ENCODE measurements at regions of chr3 and their contacts with region 1.

Region 1: DNA sequence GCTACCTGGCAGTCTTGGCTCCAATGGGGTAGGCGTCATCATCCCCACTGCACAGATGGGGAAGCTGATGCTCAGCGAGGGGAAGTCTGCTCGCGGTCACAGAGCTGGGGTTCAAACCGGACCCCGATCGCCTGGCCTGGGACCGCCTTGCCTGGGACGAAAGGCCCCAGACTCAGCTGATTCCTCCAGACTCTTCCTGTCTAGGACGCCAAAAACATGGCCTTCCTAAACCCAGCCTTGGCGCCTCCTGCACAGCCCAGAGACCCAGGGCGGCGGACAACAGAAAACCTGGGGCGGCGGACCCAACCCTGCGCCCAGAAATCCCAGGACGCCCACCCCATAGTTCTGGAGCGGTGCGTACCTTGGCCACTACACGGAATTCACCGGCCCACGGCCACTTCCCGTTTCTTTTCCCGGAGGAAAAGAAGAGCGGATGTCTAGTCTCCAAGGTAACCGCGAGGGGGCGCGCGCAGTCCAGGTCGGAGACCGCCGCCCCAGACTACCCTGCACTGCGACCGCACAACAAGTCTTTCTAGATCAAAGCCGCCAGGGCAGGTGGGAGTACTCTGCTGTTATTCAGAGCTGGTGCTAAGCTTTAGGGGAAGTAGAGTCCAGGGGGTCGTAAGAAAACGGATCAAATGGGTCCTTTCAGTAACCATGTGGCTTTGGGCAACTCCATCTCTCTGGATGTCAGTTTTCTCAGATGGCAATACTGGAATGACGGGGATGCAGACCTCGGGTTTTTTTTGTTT is 4.9 kb upstream of the IL17RD start:
- DNase-seq: peak; percentile 86
- ATAC-seq: peak; percentile 67
- H3K4me3 ChIP-seq: peak overlapping the region; percentile 16 to 67 (median 51)
- H3K4me3 Mint-ChIP-seq: peak overlapping the region; percentile 46
- H3K27ac ChIP-seq: peak overlapping the region in 1 of 2 donors; percentile 5
- H3K27ac Mint-ChIP-seq: no peak overlapping the region
- H3K4me1 ChIP-seq: peaks cover 13 to 16% of the 10 kb centered on the region in 2 donors
- H3K4me1 Mint-ChIP-seq: peaks cover 11% of the 10 kb centered on the region
- H3K27me3 ChIP-seq: peaks cover 0 to 33% (median 17%) of the 10 kb centered on the region in 4 experiments
- H3K27me3 Mint-ChIP-seq: peaks cover 37% of the 10 kb centered on the region
- CTCF ChIP-seq: peak; percentile 96

Region 2: DNA sequence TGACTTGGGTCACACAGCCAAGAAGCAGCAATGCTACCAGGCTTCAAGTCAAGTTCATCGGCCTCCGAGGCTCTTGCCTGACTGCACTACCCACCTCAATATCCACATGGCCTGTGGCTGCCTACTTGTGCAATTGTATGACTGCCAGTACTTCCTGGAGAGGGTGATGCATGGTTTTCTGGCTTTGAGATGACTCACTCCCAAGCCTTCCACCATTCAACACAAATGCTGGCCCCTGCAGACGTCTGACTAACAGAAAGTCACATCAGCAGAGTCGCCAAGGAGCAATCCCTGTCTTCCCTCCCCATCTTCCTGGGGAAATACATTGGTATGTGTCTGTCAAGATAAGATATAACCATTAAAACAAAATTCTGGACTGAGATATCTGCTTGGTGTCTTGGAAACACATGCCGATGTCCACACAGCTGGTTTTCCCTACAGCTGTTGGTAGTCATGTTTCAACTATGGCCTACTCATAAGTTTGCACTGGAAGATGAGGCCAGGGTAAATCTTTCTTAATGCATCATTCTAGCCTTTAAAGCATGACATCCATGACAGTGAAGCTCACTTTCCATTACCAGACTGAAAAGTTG is 189.2 kb before region 1 on chr3:
- CTCF ChIA-PET with region 1: no interaction called
- POLR2A ChIA-PET with region 1: no interaction called
- intact Hi-C with region 1: no loop called
- DNase-seq: no peak
- ATAC-seq: no peak
- H3K4me3 ChIP-seq: no peak overlapping the region
- H3K4me3 Mint-ChIP-seq: no peak overlapping the region
- H3K27ac ChIP-seq: no peak overlapping the region
- H3K27ac Mint-ChIP-seq: no peak overlapping the region
- H3K4me1 ChIP-seq: no peaks in the 10 kb centered on the region
- H3K4me1 Mint-ChIP-seq: no peaks in the 10 kb centered on the region
- H3K27me3 ChIP-seq: no peaks in the 10 kb centered on the region
- H3K27me3 Mint-ChIP-seq: no peaks in the 10 kb centered on the region
- CTCF ChIP-seq: no peak

Region 3: GRCh38 chr3:57158813-57159738 is 11.0 kb before region 1 on chr3:
- CTCF ChIA-PET with region 1: interaction called, 13 read pairs
- POLR2A ChIA-PET with region 1: no interaction called
- intact Hi-C with region 1: no loop called
- DNase-seq: peak; percentile 35
- ATAC-seq: peak; percentile 28
- H3K4me3 ChIP-seq: no peak overlapping the region
- H3K4me3 Mint-ChIP-seq: no peak overlapping the region
- H3K27ac ChIP-seq: no peak overlapping the region
- H3K27ac Mint-ChIP-seq: no peak overlapping the region
- H3K4me1 ChIP-seq: peaks cover 9 to 12% of the 10 kb centered on the region in 2 donors
- H3K4me1 Mint-ChIP-seq: peaks cover 8% of the 10 kb centered on the region
- H3K27me3 ChIP-seq: peaks cover 0 to 47% (median 21%) of the 10 kb centered on the region in 4 experiments
- H3K27me3 Mint-ChIP-seq: peaks cover 57% of the 10 kb centered on the region
- CTCF ChIP-seq: no peak

Region 4: GRCh38 chr3:57234613-57235575 is 64.8 kb after region 1 on chr3:
- CTCF ChIA-PET with region 1: interaction called, 10 read pairs
- POLR2A ChIA-PET with region 1: no interaction called
- intact Hi-C with region 1: no loop called
- DNase-seq: peak; percentile 78
- ATAC-seq: peak; percentile 76
- H3K4me3 ChIP-seq: peak overlapping the region in 2 of 5 experiments; percentile 17 to 45
- H3K4me3 Mint-ChIP-seq: peak overlapping the region; percentile 73
- H3K27ac ChIP-seq: peak overlapping the region; percentile 76 to 92
- H3K27ac Mint-ChIP-seq: peak overlapping the region; percentile 88
- H3K4me1 ChIP-seq: peaks cover 26 to 30% of the 10 kb centered on the region in 2 donors
- H3K4me1 Mint-ChIP-seq: peaks cover 41% of the 10 kb centered on the region
- H3K27me3 ChIP-seq: no peaks in the 10 kb centered on the region
- H3K27me3 Mint-ChIP-seq: no peaks in the 10 kb centered on the region
- CTCF ChIP-seq: no peak

Region 5: DNA sequence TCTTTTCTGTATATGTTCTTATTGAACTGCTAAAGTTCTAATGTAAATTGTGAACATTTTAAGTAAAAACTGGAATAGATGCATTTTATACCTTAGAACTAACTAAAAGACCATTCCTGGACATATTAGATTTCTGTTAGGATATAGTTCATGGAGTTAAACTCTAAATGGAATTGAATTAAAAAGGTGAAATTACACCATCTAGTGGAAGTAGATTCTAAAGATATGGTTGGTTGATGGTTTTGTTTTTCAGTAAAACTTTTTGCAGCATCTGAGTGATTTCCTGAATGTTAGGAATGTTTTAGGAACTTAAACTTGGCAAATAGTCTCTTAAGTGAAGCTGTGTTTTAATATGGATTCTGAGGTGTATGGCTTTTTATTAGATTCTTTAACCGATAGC is 682.8 kb after region 1 on chr3:
- CTCF ChIA-PET with region 1: interaction called, 3 read pairs
- POLR2A ChIA-PET with region 1: no interaction called
- intact Hi-C with region 1: loop called (anchors 5 kb)
- DNase-seq: no peak
- ATAC-seq: no peak
- H3K4me3 ChIP-seq: no peak overlapping the region
- H3K4me3 Mint-ChIP-seq: no peak overlapping the region
- H3K27ac ChIP-seq: no peak overlapping the region
- H3K27ac Mint-ChIP-seq: no peak overlapping the region
- H3K4me1 ChIP-seq: no peaks in the 10 kb centered on the region
- H3K4me1 Mint-ChIP-seq: no peaks in the 10 kb centered on the region
- H3K27me3 ChIP-seq: no peaks in the 10 kb centered on the region
- H3K27me3 Mint-ChIP-seq: no peaks in the 10 kb centered on the region
- CTCF ChIP-seq: peak; percentile 25

Region 6: DNA sequence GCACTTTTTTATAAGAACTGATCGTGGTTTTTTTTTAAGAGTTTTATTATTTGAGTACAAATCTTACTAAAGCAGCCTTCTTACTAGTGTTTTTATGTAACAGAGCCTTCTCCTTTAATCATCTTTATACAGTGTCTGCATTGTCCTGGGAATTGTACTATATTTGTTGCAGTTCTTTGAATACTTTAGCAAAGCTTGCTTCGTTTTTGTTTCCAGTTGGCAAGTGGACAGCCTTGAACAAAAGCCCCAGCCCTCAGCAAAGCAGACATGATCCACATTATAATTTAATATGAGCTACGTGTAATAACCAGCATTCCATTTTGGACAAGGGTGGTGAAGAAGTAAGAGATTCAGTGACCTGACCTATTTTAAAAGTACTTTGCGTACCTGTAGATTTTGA is 726.0 kb after region 1 on chr3:
- CTCF ChIA-PET with region 1: no interaction called
- POLR2A ChIA-PET with region 1: no interaction called
- intact Hi-C with region 1: no loop called
- DNase-seq: no peak
- ATAC-seq: no peak
- H3K4me3 ChIP-seq: no peak overlapping the region
- H3K4me3 Mint-ChIP-seq: no peak overlapping the region
- H3K27ac ChIP-seq: no peak overlapping the region
- H3K27ac Mint-ChIP-seq: no peak overlapping the region
- H3K4me1 ChIP-seq: no peaks in the 10 kb centered on the region
- H3K4me1 Mint-ChIP-seq: no peaks in the 10 kb centered on the region
- H3K27me3 ChIP-seq: no peaks in the 10 kb centered on the region
- H3K27me3 Mint-ChIP-seq: no peaks in the 10 kb centered on the region
- CTCF ChIP-seq: no peak